AG04449 (cell line): ENCODE measurements at regions of chr3 and their contacts with region 1.

Region 1: DNA sequence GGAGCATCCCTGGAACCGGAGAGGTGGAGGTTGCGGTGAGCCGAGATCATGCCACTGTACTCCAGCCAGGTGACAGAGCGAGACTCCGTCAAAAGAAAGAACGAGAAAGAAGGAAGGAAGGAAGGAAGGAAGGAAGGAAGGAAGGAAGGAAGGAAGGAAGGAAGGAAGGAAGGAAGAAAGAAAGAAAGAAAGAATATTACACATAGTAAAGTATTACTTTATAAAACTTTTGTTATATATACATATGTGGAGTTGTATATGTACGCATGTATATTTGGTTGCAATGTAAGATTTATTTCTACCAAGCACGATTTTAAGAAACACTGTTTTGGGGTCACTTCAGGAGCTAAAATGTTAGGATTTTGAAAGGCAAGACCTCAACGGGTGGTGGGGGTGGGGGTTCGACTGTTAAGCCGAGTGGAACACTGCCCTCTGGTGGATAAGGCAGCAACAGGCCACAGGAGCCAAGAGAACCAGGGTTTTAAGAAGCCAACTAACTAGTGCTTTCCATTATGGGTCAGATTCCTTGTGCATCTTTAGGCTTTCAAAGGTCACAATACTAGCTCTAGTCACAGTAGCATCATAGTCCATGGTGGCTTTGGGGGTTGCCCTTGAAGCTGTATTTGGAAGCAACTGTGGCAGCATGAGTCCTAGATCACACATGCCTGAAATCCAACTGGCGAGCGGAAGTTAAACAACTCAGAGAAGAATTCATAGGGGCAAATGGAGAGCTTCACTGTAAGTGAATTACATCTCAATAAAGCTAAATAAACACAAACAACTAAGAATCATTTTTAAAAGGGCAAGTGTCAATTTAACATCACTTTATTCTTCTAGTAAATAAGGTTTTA is 22.5 kb downstream of the GLB1 start:
- DNase-seq: no peak
- H3K4me3 ChIP-seq: no peak overlapping the region
- CTCF ChIP-seq: peak; percentile 91

Region 2: GRCh38 chr3:32947789-32948238 is 126.6 kb before region 1 on chr3:
- CTCF ChIA-PET with region 1: interaction called, 122 read pairs
- POLR2A ChIA-PET with region 1: no interaction called
- DNase-seq: peak; percentile 7
- H3K4me3 ChIP-seq: no peak overlapping the region
- CTCF ChIP-seq: peak; percentile 78

Region 3: GRCh38 chr3:33047842-33048834 is 26.3 kb before region 1 on chr3:
- CTCF ChIA-PET with region 1: interaction called, 20 read pairs
- POLR2A ChIA-PET with region 1: no interaction called
- DNase-seq: no peak
- H3K4me3 ChIP-seq: no peak overlapping the region
- CTCF ChIP-seq: no peak

Region 4: GRCh38 chr3:33063651-33064051 is 10.8 kb before region 1 on chr3:
- CTCF ChIA-PET with region 1: interaction called, 103 read pairs
- POLR2A ChIA-PET with region 1: interaction called, 3 read pairs
- DNase-seq: no peak
- H3K4me3 ChIP-seq: no peak overlapping the region
- CTCF ChIP-seq: no peak

Region 5: DNA sequence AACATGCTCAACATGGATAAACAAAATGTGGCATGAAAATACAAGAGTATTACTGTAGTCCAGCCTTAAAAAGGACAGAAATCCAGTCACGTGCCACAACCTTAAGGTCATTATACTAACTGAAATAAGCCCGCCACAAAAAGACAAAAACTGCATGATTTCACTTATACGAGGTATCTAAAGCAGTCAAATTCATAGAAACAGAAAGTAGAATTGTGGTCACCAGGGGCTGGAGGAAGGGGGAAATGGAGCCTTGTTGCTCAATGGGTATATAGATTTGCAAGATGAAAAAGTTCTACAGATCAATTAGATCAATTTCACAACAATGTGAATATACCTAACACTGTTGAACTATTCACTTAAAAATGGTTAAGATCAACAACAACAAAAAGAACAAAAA is 15.1 kb after region 1 on chr3:
- CTCF ChIA-PET with region 1: interaction called, 84 read pairs
- POLR2A ChIA-PET with region 1: no interaction called
- DNase-seq: no peak
- H3K4me3 ChIP-seq: no peak overlapping the region
- CTCF ChIP-seq: no peak

Region 6: DNA sequence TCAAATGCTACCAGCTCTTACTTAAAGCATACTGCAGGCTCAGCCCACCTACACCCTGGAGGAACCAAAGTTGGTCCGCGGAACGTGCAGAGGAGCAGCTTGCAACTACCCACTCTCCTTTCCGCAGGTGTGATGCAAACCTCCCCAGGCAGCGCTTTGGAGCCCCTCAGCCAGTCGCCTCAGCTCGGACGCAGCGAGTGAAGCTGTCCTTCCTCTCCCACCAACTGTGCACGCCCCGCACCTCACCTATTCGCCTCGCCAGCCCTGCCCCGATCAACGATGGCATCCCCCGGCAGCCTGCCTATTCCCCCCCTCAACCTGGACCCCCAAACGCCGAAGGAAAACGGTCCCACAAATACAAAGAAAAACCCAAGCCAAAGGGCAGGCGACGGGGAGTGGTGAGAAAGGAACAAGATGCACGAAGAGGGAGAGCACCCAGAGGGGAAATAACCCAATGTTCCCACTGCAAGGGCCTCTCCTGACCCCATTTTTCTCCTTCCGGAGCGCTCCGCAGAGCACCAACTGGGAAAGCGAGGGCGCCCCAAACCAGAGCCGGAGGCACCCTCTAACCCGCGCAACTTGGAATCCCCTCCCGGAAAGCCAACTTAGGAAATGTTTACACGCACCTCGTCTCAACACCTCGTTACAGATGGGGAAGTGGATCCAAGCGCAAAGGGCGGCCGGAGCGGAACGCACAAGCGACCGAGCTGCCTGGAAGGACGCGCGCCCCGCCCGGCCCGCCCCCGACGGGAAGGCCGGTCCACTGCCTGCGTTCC is 21.8 kb after region 1 on chr3:
- CTCF ChIA-PET with region 1: interaction called, 45 read pairs
- POLR2A ChIA-PET with region 1: no interaction called
- DNase-seq: no peak
- H3K4me3 ChIP-seq: peak overlapping the region; percentile 97
- CTCF ChIP-seq: no peak

Region 7: GRCh38 chr3:33482111-33482521 is 407.7 kb after region 1 on chr3:
- CTCF ChIA-PET with region 1: no interaction called
- POLR2A ChIA-PET with region 1: no interaction called
- DNase-seq: peak; percentile 23
- H3K4me3 ChIP-seq: no peak overlapping the region
- CTCF ChIP-seq: no peak